GM18951 (cell line): ENCODE measurements at regions of chr7 and their contacts with region 1.

Region 1: DNA sequence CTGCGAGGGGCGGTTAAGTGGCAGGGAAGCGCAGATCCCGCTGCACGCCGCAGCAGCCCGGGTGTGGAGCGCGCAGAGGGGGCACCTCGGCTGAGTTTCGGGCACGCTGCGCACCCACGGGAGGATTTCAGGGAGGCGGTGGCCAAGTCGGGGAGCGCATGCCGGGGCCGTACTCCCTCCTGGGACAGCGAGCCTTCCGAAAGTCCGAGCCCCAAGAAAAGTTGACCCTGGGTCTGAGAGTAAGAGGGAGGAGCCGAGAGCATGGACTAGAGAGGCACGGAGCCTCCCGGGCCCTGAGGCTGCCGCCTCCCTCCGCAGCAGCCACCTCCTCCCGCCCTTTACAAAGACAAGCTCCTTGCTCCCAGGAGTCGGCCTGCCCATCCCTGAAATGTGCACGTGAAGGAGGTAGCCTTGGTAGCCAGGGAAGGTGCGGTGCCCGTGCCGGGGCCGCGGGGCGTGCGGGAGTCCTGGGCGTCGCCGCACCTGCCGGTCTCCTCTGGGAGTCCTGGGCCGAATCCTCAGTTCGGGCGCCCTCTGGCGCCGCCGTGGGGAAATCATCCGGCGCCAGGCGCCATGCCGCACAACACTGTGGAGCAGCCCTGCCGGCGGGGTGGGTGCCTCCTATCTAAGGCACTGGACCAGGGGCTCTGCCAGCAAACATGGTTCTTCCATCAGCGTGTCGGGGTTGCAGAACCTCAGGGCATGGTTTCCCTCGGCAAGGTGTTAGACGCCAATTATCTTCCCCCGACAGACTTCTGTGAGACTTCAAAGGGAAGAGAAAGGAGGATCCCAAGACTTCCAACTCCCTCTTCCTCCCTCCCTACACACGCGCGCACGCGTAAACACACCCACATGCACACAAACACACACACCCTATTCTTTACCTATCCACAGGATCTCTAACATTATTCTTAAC is 104.0 kb downstream of the TRIL start:
- POLR2A ChIP-seq: no peak

Region 2: GRCh38 chr7:28389504-28390395 is 464.3 kb before region 1 on chr7:
- in situ Hi-C with region 1: loop called (anchors 25 kb)
- POLR2A ChIP-seq: no peak

Region 3: GRCh38 chr7:28615091-28615490 is 239.0 kb before region 1 on chr7:
- in situ Hi-C with region 1: loop called (anchors 10 kb)
- POLR2A ChIP-seq: no peak

Region 4: DNA sequence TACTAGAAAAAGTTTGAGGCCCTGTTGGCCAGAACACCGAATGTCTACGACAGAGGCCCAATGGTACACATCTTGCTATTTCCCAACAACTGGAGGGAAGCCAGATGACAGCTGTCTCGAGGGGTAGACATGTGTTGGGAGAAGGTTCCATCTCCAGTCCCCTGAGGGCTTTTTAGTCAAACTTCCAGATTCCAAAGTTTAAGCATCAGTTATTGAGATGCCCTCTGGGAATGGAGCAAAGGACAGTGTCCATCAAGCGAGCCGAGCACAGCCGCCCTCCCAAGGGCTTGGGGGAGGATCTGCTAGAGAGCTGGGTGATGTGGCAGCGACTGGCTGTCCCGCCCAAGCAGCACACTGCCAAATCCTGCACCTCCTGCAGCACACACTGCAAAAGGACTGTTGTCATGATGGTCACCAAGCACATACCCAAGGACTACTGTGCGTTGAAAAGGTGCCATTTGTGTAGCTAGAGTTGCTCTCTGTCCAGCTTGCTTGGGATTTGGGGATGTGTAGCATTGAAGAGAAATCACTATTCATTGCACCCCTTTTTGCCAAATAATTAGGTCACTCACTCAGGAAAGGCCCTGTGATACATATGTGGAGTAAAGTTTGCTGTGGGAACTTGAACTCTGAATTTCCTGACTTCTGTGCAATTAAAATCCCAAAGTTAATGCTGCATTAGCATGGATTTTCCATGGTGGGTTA is 60.6 kb before region 1 on chr7:
- in situ Hi-C with region 1: no loop called
- POLR2A ChIP-seq: no peak

Region 5: GRCh38 chr7:29319719-29320521 is 465.8 kb after region 1 on chr7:
- in situ Hi-C with region 1: no loop called
- POLR2A ChIP-seq: no peak

Region 6: DNA sequence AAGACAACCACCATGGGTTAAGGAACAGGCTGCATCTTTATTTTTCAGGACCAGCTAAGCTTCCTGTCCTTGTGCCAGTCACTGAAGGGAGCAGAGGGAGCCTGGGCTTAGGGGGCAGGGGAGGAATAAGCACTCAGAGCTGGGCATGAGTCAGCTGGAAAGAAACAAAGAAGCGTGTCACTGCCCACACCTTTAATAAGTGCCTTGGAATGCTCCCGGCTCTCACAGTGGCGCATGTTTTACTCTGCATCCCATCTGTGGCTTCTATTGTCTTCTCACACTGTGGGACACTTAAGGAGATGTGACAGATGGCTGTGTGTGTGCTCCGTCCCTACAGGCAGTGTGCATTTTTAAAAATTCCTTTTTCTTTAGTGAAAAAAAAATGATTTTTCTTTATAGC is 1352.4 kb after region 1 on chr7:
- in situ Hi-C with region 1: no loop called
- POLR2A ChIP-seq: no peak